ENCODE measurements at regions of chr12 and their contacts with region 1.

Region 1: DNA sequence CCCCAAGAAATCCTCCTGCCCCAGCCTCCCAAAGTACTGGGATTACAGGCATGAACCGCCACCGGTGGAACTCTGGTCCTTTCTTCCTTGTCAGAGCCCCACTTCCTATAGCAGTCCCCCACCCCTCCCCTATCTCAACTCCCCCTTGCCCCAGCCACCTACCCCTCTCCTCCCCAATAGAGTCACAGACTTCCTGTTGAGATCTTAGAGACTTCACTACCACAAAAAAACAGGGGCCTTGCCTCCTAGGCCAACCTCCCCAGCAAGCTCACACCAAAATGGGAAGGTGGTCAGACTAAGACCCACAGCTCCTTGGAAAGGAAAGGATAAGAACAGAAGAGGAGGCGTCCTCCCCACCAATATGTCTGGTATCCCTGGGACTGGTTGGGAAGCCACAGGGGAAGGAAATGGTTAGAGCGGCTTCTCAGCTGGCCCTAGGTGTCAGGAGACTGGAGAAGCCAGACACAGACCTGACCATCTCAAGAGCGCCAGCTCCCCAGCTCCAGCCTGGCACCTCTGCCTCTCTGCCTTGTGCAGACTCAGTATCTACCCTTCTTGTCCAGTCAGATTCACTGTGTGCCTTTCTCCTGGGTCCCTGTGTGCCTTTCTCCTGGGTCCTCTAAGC is 8.5 kb downstream of the ITGB7 start:
- DNase-seq: no peak
- H3K4me3 ChIP-seq: no peak overlapping the region
- H3K27ac ChIP-seq: no peak overlapping the region
- H3K4me1 ChIP-seq: peaks cover 10% of the 10 kb centered on the region
- H3K27me3 ChIP-seq: no peaks in the 10 kb centered on the region
- CTCF ChIP-seq: no peak

Region 2: GRCh38 chr12:53098982-53099651 is 99.5 kb before region 1 on chr12:
- CTCF ChIA-PET with region 1: no interaction called
- POLR2A ChIA-PET with region 1: interaction called, 17 read pairs
- intact Hi-C with region 1: no loop called
- DNase-seq: peak; percentile 90 to 92
- H3K4me3 ChIP-seq: peak overlapping the region; percentile 96
- H3K27ac ChIP-seq: peak overlapping the region; percentile 87
- H3K4me1 ChIP-seq: peaks cover 22% of the 10 kb centered on the region
- H3K27me3 ChIP-seq: no peaks in the 10 kb centered on the region
- CTCF ChIP-seq: peak; percentile 95

Region 3: DNA sequence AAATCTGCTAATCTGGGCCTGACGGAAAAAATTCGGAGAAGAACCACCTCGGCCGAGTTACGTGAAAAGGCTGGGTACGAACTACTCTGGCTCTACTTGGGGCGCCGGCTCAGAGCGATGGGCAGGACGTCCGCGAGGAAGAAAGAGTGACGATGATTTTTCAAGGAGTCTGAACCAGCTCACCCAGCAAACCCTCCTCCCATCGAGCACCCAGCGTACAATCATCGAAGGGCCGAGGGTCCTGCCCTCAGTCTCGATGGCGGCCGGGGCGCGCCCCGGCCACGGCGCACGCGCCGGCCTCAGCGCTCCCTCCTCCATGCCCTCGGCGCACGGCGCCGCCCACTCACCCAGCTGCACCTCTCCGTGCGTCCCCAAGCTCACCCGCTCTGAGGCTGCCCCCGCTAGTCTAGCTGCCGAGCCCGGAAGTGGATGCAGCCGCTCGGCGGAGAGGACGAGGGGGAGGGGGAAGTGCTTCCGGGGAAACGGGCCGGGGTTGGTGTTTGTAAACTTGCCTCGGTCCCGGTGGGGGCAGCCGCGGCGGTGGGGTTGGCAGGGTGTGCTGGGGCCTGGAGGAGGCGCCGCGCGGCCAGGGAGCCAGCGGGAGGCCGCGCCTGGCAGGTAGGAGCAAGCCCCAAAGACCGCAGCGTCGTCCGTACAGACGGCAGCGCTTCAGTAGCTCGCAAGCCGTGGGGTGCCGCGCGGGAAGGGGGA is 18.2 kb before region 1 on chr12 and contains the starts of genes CSAD and ZNF740:
- CTCF ChIA-PET with region 1: no interaction called
- POLR2A ChIA-PET with region 1: interaction called, 11 read pairs
- intact Hi-C with region 1: loop called (anchors 1 kb)
- DNase-seq: peak; percentile 90 to 97
- H3K4me3 ChIP-seq: peak within 1 kb of the TSS; percentile 61
- H3K27ac ChIP-seq: peak within 1 kb of the TSS; percentile 74
- H3K4me1 ChIP-seq: peaks cover 34% of the 10 kb centered on the region
- H3K27me3 ChIP-seq: no peaks in the 10 kb centered on the region
- CTCF ChIP-seq: no peak
- total RNA-seq, gene CSAD: 33.1 and 49.0 TPM in 2 replicates
- total RNA-seq, gene ZNF740: 48.3 and 65.8 TPM in 2 replicates

Region 4: DNA sequence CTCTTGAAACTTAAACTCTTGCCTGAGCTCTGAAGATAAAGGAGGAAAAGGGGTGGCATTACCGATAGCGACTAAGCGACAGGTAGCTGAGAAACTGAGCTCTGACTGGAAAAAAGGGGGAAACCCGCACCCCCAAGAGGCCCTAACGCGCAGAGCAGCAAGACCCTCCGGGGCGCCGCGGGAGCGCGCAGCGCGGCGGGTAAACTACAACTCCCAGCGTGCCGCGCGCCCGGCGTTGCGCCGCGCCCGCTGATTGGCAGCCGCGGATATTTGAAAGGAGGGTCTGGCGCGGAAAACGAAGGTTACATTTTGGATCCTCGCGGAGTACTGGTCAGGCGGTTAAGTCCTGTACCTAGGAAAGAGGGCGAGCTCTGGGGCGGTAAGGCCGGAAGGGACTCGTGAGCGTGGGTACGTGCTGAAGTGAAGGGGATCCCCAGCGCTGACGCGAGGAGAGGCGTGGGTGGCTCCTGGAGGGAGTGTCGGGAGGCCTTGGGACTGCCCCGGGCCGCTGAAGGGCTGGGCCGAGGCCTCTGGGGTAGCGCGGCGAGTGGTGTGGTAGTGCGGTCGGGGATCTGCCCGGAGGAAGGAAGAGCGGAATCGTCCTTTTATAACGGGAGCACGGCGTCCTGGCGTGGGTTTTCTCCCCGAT is 69.5 kb after region 1 on chr12 and contains the start of gene ESPL1:
- CTCF ChIA-PET with region 1: no interaction called
- POLR2A ChIA-PET with region 1: interaction called, 11 read pairs
- intact Hi-C with region 1: no loop called
- DNase-seq: peak; percentile 63 to 73
- H3K4me3 ChIP-seq: peak within 1 kb of the TSS; percentile 85
- H3K27ac ChIP-seq: no peak within 1 kb of the TSS
- H3K4me1 ChIP-seq: peaks cover 11% of the 10 kb centered on the region
- H3K27me3 ChIP-seq: no peaks in the 10 kb centered on the region
- CTCF ChIP-seq: no peak; the same call in 1 of the 2 replicates
- total RNA-seq, gene ESPL1: 37.4 and 42.0 TPM in 2 replicates

Region 5: GRCh38 chr12:53454710-53455109 is 256.1 kb after region 1 on chr12:
- CTCF ChIA-PET with region 1: no interaction called
- POLR2A ChIA-PET with region 1: no interaction called
- intact Hi-C with region 1: no loop called
- DNase-seq: no peak
- H3K4me3 ChIP-seq: no peak overlapping the region; the same call in 1 of the 2 replicates
- H3K27ac ChIP-seq: no peak overlapping the region
- H3K4me1 ChIP-seq: peaks cover 16% of the 10 kb centered on the region
- H3K27me3 ChIP-seq: no peaks in the 10 kb centered on the region
- CTCF ChIP-seq: no peak

Region 6: DNA sequence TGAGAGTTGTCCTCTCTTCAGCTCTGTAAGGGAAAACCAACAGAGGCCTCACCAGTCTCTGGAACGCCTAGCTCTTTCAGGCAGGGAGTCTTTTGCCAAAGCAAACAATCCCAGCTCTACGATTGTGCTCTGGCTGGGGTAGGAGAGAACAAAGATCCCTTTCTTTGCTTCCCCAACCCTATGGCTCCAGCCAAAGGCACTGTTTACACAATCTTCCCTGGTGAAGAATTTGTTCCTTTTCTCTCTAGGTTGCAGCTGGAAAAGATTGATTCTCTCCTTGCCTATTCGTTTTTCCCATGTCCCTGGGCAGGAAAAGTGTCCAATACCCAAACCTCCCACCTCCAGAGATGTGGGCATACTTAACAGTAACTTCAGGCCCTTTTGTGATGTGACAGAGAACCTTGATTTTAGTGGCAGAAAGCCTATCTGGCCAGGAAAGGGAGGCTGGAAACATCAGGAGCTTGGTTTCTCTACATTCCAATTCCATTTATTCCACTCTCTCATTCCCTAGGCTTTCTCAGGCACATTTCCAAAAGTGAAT is 460.5 kb after region 1 on chr12:
- CTCF ChIA-PET with region 1: no interaction called
- POLR2A ChIA-PET with region 1: interaction called, 11 read pairs
- intact Hi-C with region 1: no loop called
- DNase-seq: peak; percentile 44 to 68
- H3K4me3 ChIP-seq: no peak overlapping the region
- H3K27ac ChIP-seq: peak overlapping the region; percentile 27
- H3K4me1 ChIP-seq: peaks cover 16% of the 10 kb centered on the region
- H3K27me3 ChIP-seq: no peaks in the 10 kb centered on the region
- CTCF ChIP-seq: no peak